Heart left ventricle (tissue), 16 donors: ENCODE measurements at regions of chr7 and their contacts with region 1.

Region 1: GRCh38 chr7:29084832-29085231 is 61.5 kb downstream of the CPVL start:
- DNase-seq: no peak
- ATAC-seq: peak in 3 of 4 donors; percentile 36 to 64 (median 41)
- H3K4me3 ChIP-seq: no peak overlapping the region
- H3K27ac ChIP-seq: no peak overlapping the region
- H3K4me1 ChIP-seq: peaks cover 0 to 37% (median 18%) of the 10 kb centered on the region in 12 donors
- H3K27me3 ChIP-seq: no peaks in the 10 kb centered on the region
- CTCF ChIP-seq: no peak
- POLR2A ChIP-seq: no peak

Region 2: GRCh38 chr7:29017713-29018112 is 67.1 kb before region 1 on chr7:
- intact Hi-C with region 1: loop called in 2 of 10 experiments (anchors 5 to 10 kb)
- DNase-seq: no peak
- ATAC-seq: peak in 3 of 4 donors; percentile 29 to 41 (median 41)
- H3K4me3 ChIP-seq: no peak overlapping the region
- H3K27ac ChIP-seq: peak overlapping the region in 1 of 12 donors; percentile 38
- H3K4me1 ChIP-seq: peaks cover 0 to 33% (median 11%) of the 10 kb centered on the region in 12 donors
- H3K27me3 ChIP-seq: no peaks in the 10 kb centered on the region
- CTCF ChIP-seq: no peak
- POLR2A ChIP-seq: no peak

Region 3: DNA sequence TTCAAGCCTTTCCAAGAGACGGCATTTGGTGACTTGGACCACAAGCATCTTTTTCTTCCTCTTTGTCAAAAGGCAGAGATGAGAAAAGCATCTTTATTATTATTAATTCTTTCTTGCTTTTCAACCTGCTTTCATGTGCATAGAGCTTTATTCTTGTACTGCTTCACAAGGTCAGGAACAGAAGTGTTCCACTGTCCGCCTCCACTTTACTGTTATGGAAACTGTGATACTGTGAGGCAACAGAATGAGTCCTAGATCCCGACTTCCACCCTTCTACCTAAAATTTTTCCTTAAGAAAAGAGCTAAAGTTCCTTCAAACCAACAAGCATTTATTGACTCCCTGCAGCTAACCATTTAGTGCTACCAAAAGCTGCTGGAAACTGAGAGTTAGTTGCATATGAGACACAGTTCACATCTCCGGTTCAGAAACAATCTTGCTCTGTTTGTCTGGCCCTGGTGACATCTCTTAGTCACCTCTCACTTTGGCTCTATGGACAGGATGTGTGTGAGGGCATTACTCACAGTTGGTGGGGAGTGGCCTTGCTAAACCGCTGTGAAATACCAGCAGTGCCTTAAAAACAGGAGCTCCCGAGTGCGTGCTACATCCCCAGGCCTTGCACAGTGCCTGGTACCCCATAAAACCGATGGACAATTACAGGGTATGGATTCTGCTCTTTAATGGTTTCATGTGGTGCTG is 49.6 kb before region 1 on chr7:
- intact Hi-C with region 1: loop called in 2 of 10 experiments (anchors 10 kb)
- DNase-seq: no peak
- ATAC-seq: peak; percentile 43 to 85 (median 79)
- H3K4me3 ChIP-seq: no peak overlapping the region
- H3K27ac ChIP-seq: peak overlapping the region in 5 of 12 donors; percentile 5 to 52 (median 20)
- H3K4me1 ChIP-seq: peaks cover 0 to 49% (median 21%) of the 10 kb centered on the region in 12 donors
- H3K27me3 ChIP-seq: no peaks in the 10 kb centered on the region
- CTCF ChIP-seq: no peak
- POLR2A ChIP-seq: no peak

Region 4: GRCh38 chr7:29045258-29046086 is 39.4 kb before region 1 on chr7:
- intact Hi-C with region 1: loop called in 2 of 10 experiments (anchors 5 to 10 kb)
- DNase-seq: no peak
- ATAC-seq: no peak
- H3K4me3 ChIP-seq: no peak overlapping the region
- H3K27ac ChIP-seq: no peak overlapping the region
- H3K4me1 ChIP-seq: peaks cover 0 to 16% (median 8%) of the 10 kb centered on the region in 12 donors
- H3K27me3 ChIP-seq: no peaks in the 10 kb centered on the region
- CTCF ChIP-seq: no peak
- POLR2A ChIP-seq: no peak